ENCODE measurements at regions of chr5 and their contacts with region 1.

Region 1: DNA sequence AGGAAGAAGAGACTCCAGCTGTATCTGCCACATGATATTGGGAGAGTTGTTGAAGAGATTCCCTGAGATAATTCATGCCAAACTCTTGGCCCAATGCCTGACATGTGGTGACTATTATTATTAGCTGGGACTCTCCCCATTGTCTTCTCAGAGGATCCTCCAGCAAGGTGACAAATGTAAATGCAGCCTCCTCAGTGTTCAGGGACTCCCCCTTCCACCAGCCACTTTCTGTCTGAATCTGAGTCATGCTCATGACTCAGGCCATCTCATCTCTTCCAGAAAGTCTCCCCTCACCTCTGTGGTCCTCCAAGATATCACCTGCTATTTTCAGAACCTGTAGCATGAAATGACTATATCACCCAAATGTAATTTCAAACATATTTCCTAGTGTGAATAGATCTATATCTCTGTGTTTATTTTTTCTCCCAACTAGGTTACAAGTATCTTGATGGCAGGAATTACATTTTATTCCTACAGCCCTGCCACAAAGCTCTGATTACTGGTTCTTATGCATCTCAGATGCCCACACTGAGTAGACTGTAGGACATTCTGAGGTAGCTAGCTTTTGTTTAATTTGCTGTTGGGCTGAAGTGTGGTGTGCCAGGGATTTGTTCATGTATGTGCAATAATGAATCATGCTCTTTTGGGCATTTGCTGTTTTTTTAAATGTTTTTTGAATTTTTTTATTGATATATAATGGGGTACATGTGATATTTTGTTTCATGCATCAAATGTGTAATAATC is 126.6 kb upstream of the IL12B start:
- DNase-seq: peak; percentile 36
- H3K4me3 Mint-ChIP-seq: no peak overlapping the region
- H3K27ac Mint-ChIP-seq: peak overlapping the region; percentile 1
- H3K4me1 Mint-ChIP-seq: peaks cover 41% of the 10 kb centered on the region
- H3K27me3 Mint-ChIP-seq: peaks cover 60% of the 10 kb centered on the region

Region 2: GRCh38 chr5:159163027-159163700 is 293.7 kb before region 1 on chr5:
- intact Hi-C with region 1: loop called (anchors 1 kb)
- DNase-seq: no peak
- H3K4me3 Mint-ChIP-seq: no peak overlapping the region
- H3K27ac Mint-ChIP-seq: peak overlapping the region; percentile 42
- H3K4me1 Mint-ChIP-seq: peaks cover 38% of the 10 kb centered on the region
- H3K27me3 Mint-ChIP-seq: no peaks in the 10 kb centered on the region

Region 3: DNA sequence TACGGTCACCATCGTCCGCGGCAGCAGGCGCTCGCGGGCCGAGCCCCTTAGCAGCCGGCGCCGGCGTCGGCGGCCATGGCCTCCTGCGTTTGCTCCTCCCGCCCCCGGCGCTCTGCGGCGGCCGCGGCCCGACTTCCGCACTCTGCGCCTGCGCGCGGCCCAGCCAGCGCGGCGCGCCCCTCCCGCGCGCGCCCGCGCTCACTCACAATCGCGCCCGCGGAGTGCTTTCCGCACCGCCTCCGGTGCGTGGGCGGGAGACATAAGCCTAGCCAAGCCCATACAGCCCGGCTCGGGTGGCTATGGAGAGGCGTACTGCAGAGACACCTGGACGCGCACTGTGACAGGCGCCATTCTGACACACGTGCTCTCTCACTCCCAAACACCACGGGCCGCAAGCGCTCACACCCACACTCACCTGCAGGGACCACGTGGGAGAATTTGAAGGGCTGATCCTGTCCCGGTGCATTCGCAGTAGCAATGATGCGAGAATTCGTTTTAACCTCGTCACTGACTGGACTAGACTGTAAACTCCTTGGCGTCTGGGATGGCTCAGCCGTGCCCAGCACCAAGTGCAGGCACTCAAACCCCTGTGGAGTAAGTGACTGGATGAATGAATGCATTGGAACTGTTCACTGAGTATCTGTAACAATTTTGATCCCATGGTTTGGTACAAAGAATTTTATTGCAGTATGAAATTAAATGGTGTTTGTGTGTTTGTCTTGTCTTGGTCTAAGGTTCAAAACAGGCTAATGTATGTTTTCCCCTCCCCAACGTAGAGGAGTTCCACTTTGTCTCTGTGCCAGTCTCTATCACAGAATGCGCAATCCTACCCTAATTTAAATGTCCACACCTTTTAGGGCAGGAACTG is 247.2 kb before region 1 on chr5 and contains the start of gene RNF145:
- intact Hi-C with region 1: loop called (anchors 2 kb)
- DNase-seq: peak; percentile 86
- H3K4me3 Mint-ChIP-seq: peak within 1 kb of the TSS; percentile 91
- H3K27ac Mint-ChIP-seq: peak within 1 kb of the TSS; percentile 97
- H3K4me1 Mint-ChIP-seq: peaks cover 50% of the 10 kb centered on the region
- H3K27me3 Mint-ChIP-seq: peaks cover 7% of the 10 kb centered on the region
- total RNA-seq, gene RNF145: 113 and 124 TPM in 2 replicates

Region 4: GRCh38 chr5:159240301-159240870 is 216.5 kb before region 1 on chr5:
- intact Hi-C with region 1: loop called (anchors 1 kb)
- DNase-seq: no peak
- H3K4me3 Mint-ChIP-seq: no peak overlapping the region
- H3K27ac Mint-ChIP-seq: peak overlapping the region; percentile 6
- H3K4me1 Mint-ChIP-seq: peaks cover 25% of the 10 kb centered on the region
- H3K27me3 Mint-ChIP-seq: no peaks in the 10 kb centered on the region

Region 5: GRCh38 chr5:159412284-159413046 is 44.4 kb before region 1 on chr5:
- intact Hi-C with region 1: loop called (anchors 1 kb)
- DNase-seq: peak; percentile 79
- H3K4me3 Mint-ChIP-seq: no peak overlapping the region
- H3K27ac Mint-ChIP-seq: no peak overlapping the region
- H3K4me1 Mint-ChIP-seq: peaks cover 48% of the 10 kb centered on the region
- H3K27me3 Mint-ChIP-seq: peaks cover 32% of the 10 kb centered on the region

Region 6: GRCh38 chr5:159779481-159779880 is 322.6 kb after region 1 on chr5:
- intact Hi-C with region 1: loop called (anchors 1 kb)
- DNase-seq: no peak
- H3K4me3 Mint-ChIP-seq: no peak overlapping the region
- H3K27ac Mint-ChIP-seq: no peak overlapping the region
- H3K4me1 Mint-ChIP-seq: peaks cover 52% of the 10 kb centered on the region
- H3K27me3 Mint-ChIP-seq: peaks cover 4% of the 10 kb centered on the region

Measured in activated T-helper 2 cell treated with anti-CD3 and anti-CD28 coated beads, Interferon-gamma antibody, Interleukin-2, Interleukin-4, amounts not matched to agents 10 μg/mL and 5 μg/mL and 100 μg/mL, durations not matched to agents 14 hours and 24 hours and 36 hours (primary cell).